Activated T-helper 2 cell treated with anti-CD3 and anti-CD28 coated beads, Interferon-gamma antibody, Interleukin-2, Interleukin-4, amounts not matched to agents 10 μg/mL and 5 μg/mL and 100 μg/mL, durations not matched to agents 14 hours and 24 hours and 36 hours (primary cell): ENCODE measurements at regions of chr10 and their contacts with region 1.

Region 1: GRCh38 chr10:104337974-104338735 is at the start of gene ITPRIP:
- DNase-seq: peak; percentile 74
- H3K4me3 Mint-ChIP-seq: peak within 1 kb of the TSS; percentile 97
- H3K27ac Mint-ChIP-seq: peak within 1 kb of the TSS; percentile 99
- H3K4me1 Mint-ChIP-seq: peaks cover 46% of the 10 kb centered on the region
- H3K27me3 Mint-ChIP-seq: peaks cover 1% of the 10 kb centered on the region
- total RNA-seq, gene ITPRIP: 17.1 and 18.8 TPM in 2 replicates

Region 2: GRCh38 chr10:104322416-104322782 is 15.8 kb before region 1 on chr10:
- intact Hi-C with region 1: loop called (anchors 2 kb)
- DNase-seq: no peak
- H3K4me3 Mint-ChIP-seq: peak overlapping the region; percentile 31
- H3K27ac Mint-ChIP-seq: peak overlapping the region; percentile 46
- H3K4me1 Mint-ChIP-seq: peaks cover 70% of the 10 kb centered on the region
- H3K27me3 Mint-ChIP-seq: no peaks in the 10 kb centered on the region